Panc1 (cell line): ENCODE measurements at regions of chr6 and their contacts with region 1.

Region 1: GRCh38 chr6:108222504-108222903 is 38.3 kb downstream of the SNX3 start:
- DNase-seq: no peak
- ATAC-seq: no peak
- H3K4me3 ChIP-seq: no peak overlapping the region
- H3K27ac ChIP-seq: no peak overlapping the region
- H3K4me1 ChIP-seq: no peaks in the 10 kb centered on the region
- H3K27me3 ChIP-seq: no peaks in the 10 kb centered on the region
- CTCF ChIP-seq: no peak

Region 2: DNA sequence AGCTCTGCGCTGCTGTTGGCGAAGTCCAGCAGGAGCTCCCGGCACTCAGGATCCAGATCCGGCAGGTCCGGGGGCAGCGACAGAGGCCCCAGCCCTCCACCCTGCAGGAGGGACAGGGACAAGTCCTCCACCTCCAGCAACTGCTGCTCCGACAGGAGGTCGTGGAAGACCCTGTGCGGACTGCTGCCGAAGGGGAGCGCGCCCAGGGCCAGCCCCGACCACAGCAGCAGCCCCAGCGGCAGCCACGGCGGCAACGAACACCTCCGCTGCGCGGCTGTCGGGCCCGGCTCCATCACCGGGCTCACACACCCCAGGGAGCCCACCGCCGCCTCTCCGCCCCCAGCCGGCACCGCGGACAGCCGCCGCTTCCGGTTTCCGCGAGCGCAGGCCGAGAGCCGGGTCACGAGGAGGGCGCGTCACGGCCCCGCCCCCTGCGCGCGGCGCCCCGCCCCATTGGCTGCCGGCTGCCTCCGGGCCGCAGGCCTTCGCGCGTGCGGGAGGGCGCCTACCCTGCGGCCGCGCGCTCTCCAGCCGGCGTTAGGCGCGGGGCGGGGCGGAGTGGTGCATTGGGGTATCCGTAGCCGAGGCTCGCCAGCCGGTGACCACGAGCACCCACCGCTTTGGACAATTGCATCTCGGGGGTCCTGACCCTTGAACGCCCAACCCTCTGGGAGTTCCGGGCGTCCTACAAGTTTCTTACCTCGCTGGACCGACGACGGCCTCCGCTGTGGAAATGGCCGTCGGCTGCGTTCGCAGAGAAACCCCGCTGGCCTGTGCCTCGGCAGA is 148.0 kb before region 1 on chr6 and contains the start of gene OSTM1:
- CTCF ChIA-PET with region 1: no interaction called
- POLR2A ChIA-PET with region 1: no interaction called
- in situ Hi-C with region 1: no loop called
- intact Hi-C with region 1: no loop called
- DNase-seq: peak; percentile 36
- ATAC-seq: peak; percentile 99
- H3K4me3 ChIP-seq: peak within 1 kb of the TSS; percentile 68 to 98
- H3K27ac ChIP-seq: peak within 1 kb of the TSS; percentile 96
- H3K4me1 ChIP-seq: peaks cover 17% of the 10 kb centered on the region
- H3K27me3 ChIP-seq: no peaks in the 10 kb centered on the region
- CTCF ChIP-seq: no peak
- total RNA-seq, gene OSTM1: 277 TPM

Region 3: GRCh38 chr6:108176281-108177089 is 46.0 kb before region 1 on chr6:
- CTCF ChIA-PET with region 1: no interaction called
- POLR2A ChIA-PET with region 1: interaction called, 16 read pairs
- in situ Hi-C with region 1: no loop called
- intact Hi-C with region 1: no loop called
- DNase-seq: no peak
- ATAC-seq: 0 out of 2 replicates have a peak, but pooled peaks have one; percentile 33
- H3K4me3 ChIP-seq: peak overlapping the region; percentile 23 to 43; a peak in 3 of 4 replicates
- H3K27ac ChIP-seq: no peak overlapping the region
- H3K4me1 ChIP-seq: no peaks in the 10 kb centered on the region; the same call in 1 of the 2 replicates
- H3K27me3 ChIP-seq: peaks cover 4% of the 10 kb centered on the region; the same call in 1 of the 2 replicates
- CTCF ChIP-seq: no peak

Region 4: GRCh38 chr6:108198761-108199498 is 23.6 kb before region 1 on chr6:
- CTCF ChIA-PET with region 1: no interaction called
- POLR2A ChIA-PET with region 1: interaction called, 12 read pairs
- in situ Hi-C with region 1: no loop called
- intact Hi-C with region 1: no loop called
- DNase-seq: no peak
- ATAC-seq: no peak
- H3K4me3 ChIP-seq: no peak overlapping the region
- H3K27ac ChIP-seq: no peak overlapping the region
- H3K4me1 ChIP-seq: peaks cover 14% of the 10 kb centered on the region
- H3K27me3 ChIP-seq: no peaks in the 10 kb centered on the region
- CTCF ChIP-seq: no peak

Region 5: GRCh38 chr6:108341372-108341771 is 118.9 kb after region 1 on chr6:
- CTCF ChIA-PET with region 1: no interaction called
- POLR2A ChIA-PET with region 1: interaction called, 13 read pairs
- in situ Hi-C with region 1: no loop called
- intact Hi-C with region 1: no loop called
- DNase-seq: no peak
- ATAC-seq: no peak
- H3K4me3 ChIP-seq: no peak overlapping the region
- H3K27ac ChIP-seq: no peak overlapping the region
- H3K4me1 ChIP-seq: no peaks in the 10 kb centered on the region
- H3K27me3 ChIP-seq: no peaks in the 10 kb centered on the region
- CTCF ChIP-seq: no peak

Region 6: GRCh38 chr6:109349419-109350078 is 1127.0 kb after region 1 on chr6:
- CTCF ChIA-PET with region 1: no interaction called
- POLR2A ChIA-PET with region 1: interaction called, 10 read pairs
- in situ Hi-C with region 1: no loop called
- intact Hi-C with region 1: no loop called
- DNase-seq: no peak
- ATAC-seq: 0 out of 2 replicates have a peak, but pooled peaks have one; percentile 17
- H3K4me3 ChIP-seq: no peak overlapping the region
- H3K27ac ChIP-seq: no peak overlapping the region
- H3K4me1 ChIP-seq: no peaks in the 10 kb centered on the region
- H3K27me3 ChIP-seq: no peaks in the 10 kb centered on the region
- CTCF ChIP-seq: no peak